ENCODE measurements at regions of chr19 and their contacts with region 1.

Region 1: DNA sequence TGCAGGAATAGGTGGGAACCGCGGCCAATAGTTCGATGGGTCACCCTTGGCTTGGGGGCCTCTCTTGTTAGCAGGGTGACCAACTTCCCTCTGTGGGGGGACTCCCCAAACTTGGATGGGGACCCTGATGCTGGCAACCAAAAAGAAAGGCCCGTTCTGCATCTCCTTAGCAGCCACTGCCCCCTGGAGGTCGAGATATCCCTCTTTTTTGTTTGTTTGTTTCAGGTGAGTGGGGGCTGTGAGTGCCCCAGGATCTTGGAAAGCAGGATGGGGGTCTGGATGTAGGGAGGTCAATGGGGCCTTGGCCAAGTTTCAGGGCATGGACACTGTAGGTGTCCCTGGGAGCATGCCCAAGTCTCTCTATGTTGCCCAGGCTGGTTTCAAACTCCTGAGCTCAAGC is 7.7 kb upstream of the CRTC1 start:
- DNase-seq: peak; percentile 33
- H3K4me3 ChIP-seq: no peak overlapping the region
- H3K27ac ChIP-seq: no peak overlapping the region
- H3K4me1 ChIP-seq: peaks cover 10% of the 10 kb centered on the region
- H3K27me3 ChIP-seq: no peaks in the 10 kb centered on the region
- CTCF ChIP-seq: peak; percentile 55

Region 2: GRCh38 chr19:18538115-18538514 is 137.7 kb before region 1 on chr19:
- CTCF ChIA-PET with region 1: no interaction called
- POLR2A ChIA-PET with region 1: interaction called, 23 read pairs
- intact Hi-C with region 1: no loop called
- DNase-seq: no peak
- H3K4me3 ChIP-seq: no peak overlapping the region
- H3K27ac ChIP-seq: no peak overlapping the region
- H3K4me1 ChIP-seq: peaks cover 5% of the 10 kb centered on the region
- H3K27me3 ChIP-seq: no peaks in the 10 kb centered on the region
- CTCF ChIP-seq: no peak

Region 3: GRCh38 chr19:18589380-18590272 is 86.2 kb before region 1 on chr19:
- CTCF ChIA-PET with region 1: interaction called, 3 read pairs
- POLR2A ChIA-PET with region 1: no interaction called
- intact Hi-C with region 1: loop called (anchors 5 kb)
- DNase-seq: peak; percentile 93
- H3K4me3 ChIP-seq: peak overlapping the region; percentile 83
- H3K27ac ChIP-seq: peak overlapping the region; percentile 96
- H3K4me1 ChIP-seq: peaks cover 40% of the 10 kb centered on the region
- H3K27me3 ChIP-seq: no peaks in the 10 kb centered on the region
- CTCF ChIP-seq: no peak

Region 4: DNA sequence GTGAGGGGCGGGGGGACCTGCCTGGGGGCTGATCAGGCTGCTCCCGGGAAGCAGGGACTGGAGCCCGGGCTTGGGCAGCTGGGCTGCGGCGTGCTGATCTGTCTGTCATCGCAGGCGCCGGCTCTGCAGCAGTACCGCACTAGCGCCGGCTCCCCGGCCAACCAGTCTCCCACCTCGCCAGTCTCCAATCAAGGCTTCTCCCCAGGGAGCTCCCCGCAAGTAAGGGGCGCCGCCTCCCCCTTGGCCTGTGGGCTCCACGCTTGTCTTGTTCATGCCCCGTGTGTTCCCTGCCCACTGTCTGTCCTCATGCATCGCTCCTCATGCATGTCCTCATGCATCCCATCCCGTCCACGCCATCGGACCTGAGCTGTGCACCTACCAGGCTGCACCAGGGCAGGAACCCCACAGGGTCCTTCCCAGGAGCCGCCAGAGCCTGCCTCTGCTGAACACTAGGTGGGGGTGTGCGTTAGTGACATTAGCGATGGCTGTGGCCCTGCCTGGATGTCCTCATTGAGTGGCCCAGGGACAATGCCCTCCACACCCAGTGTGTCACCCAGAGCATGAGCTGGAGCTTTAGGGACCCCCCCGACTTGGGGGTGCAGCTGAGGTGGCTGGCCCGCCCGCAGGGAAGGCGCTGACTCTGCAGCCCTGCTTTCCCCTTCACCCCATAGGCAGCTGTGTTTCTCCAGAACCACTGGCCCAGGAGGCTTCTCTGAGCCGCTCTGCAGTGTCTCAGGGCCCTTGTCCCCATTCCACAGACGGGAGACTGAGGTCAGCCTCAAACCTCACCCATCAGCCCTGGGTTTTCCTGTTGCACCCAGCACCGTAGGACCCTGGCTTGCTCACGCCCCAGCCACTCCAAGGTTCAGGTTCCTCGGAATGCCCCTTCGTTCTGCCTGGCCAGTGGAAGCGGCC is 95.8 kb after region 1 on chr19:
- CTCF ChIA-PET with region 1: interaction called, 18 read pairs
- POLR2A ChIA-PET with region 1: no interaction called
- intact Hi-C with region 1: no loop called
- DNase-seq: peak; percentile 54
- H3K4me3 ChIP-seq: no peak overlapping the region
- H3K27ac ChIP-seq: no peak overlapping the region
- H3K4me1 ChIP-seq: no peaks in the 10 kb centered on the region
- H3K27me3 ChIP-seq: no peaks in the 10 kb centered on the region
- CTCF ChIP-seq: peak; percentile 65

Region 5: GRCh38 chr19:18972301-18972811 is 296.6 kb after region 1 on chr19:
- CTCF ChIA-PET with region 1: no interaction called
- POLR2A ChIA-PET with region 1: no interaction called
- intact Hi-C with region 1: no loop called
- DNase-seq: peak; percentile 28
- H3K4me3 ChIP-seq: no peak overlapping the region
- H3K27ac ChIP-seq: peak overlapping the region; percentile 53
- H3K4me1 ChIP-seq: peaks cover 31% of the 10 kb centered on the region
- H3K27me3 ChIP-seq: no peaks in the 10 kb centered on the region
- CTCF ChIP-seq: no peak

Measured in A673 (cell line).